ENCODE measurements at regions of chr6 and their contacts with region 1.

Region 1: DNA sequence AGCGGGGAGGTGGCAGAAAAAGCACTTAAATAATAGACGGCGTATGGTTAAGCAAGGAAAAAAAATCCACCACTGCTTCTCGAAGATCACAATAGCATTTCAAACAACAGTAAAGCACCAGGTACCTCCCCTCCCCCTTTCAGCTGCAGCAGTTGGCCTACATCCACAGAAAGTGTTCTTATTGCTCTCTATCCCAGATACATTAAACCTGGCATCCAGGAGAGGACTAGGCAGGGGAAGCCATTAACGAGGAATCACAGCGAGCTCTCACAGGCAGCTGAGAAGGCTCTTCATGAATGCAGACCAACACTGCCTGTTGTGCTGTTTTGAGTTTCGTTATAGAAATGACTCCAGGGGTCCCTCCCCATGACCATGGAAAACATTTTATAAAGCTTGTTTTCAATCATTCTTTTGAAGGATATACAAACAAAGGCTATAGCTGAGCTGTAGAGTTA is 11.8 kb downstream of the FYN start:
- DNase-seq: no peak
- ATAC-seq: peak; percentile 41
- H3K4me3 Mint-ChIP-seq: peak overlapping the region; percentile 35
- H3K27ac Mint-ChIP-seq: peak overlapping the region; percentile 91
- H3K4me1 Mint-ChIP-seq: peaks cover 99% of the 10 kb centered on the region
- H3K27me3 Mint-ChIP-seq: no peaks in the 10 kb centered on the region
- CTCF ChIP-seq: no peak

Region 2: GRCh38 chr6:110981202-110981600 is 880.3 kb before region 1 on chr6:
- CTCF ChIA-PET with region 1: no interaction called
- POLR2A ChIA-PET with region 1: no interaction called
- intact Hi-C with region 1: no loop called
- DNase-seq: no peak
- ATAC-seq: no peak
- H3K4me3 Mint-ChIP-seq: peak overlapping the region; percentile 97
- H3K27ac Mint-ChIP-seq: peak overlapping the region; percentile 97
- H3K4me1 Mint-ChIP-seq: peaks cover 40% of the 10 kb centered on the region
- H3K27me3 Mint-ChIP-seq: no peaks in the 10 kb centered on the region
- CTCF ChIP-seq: no peak

Region 3: DNA sequence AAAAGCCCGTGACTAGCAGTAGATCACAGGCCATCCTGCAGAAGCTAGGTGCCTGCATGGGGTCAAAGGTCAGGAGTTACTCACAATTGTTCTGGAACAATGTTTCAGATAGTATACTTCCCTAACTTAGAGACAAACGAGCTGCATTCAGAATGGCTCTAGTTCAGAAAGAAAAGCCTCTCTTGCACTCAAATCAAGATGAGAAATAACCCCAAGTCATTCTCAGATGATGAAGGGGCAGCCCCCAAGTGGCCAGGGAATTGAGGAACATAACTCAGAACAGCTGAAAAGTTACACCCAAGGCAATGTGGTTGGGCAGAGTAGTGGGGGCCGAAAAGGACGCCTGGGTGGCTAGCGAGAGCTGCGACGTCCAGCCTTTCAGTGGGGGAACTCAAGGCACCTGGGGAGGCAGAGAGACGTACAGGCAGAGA is 16.0 kb before region 1 on chr6:
- CTCF ChIA-PET with region 1: interaction called, 14 read pairs
- POLR2A ChIA-PET with region 1: interaction called, 23 read pairs
- intact Hi-C with region 1: no loop called
- DNase-seq: peak; percentile 56
- ATAC-seq: peak; percentile 10
- H3K4me3 Mint-ChIP-seq: no peak overlapping the region
- H3K27ac Mint-ChIP-seq: no peak overlapping the region
- H3K4me1 Mint-ChIP-seq: peaks cover 17% of the 10 kb centered on the region
- H3K27me3 Mint-ChIP-seq: no peaks in the 10 kb centered on the region
- CTCF ChIP-seq: no peak

Measured in activated CD8-positive, alpha-beta T cell treated with anti-CD3 and anti-CD28 coated beads for 36 hours (primary cell).